HEK293T (cell line): ENCODE measurements at regions of chr15 and their contacts with region 1.

Region 1: DNA sequence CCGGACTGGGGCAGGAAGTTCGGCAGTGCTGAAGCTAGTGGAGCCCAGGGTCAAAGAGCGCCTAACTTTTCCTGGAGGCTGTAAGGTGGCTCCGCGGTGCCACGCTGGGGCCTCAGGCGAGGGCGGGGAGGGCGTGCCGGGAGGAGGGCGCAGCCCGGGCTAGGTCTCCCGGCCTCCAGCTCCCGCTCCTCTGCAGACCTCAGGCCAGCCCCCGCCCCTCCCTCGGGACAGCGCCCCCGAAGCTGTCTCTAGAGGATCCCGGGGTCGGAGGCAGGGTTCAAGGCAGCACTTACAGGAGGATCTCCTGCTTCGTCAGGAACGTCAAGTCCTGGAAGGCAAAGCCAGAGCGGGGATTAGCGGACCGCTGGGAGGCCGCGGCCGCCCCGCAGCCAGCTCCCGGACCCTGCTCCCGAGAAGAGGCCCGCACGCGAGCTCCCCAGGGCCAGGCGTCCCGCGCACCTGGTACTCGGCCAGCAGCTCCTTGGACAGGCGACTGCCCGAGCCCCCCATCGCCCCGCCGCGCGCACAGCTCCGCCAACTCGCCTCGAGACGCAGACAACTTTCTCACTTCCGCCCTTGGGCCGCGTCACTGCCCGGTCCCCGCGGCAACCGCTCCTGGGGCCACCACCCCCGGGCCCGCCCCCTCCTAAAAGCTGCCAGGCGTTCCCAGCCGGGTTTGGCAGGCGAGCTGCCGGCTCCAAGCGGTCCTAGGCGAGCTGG is at the start of gene CIB1:
- DNase-seq: peak; percentile 100

Region 2: GRCh38 chr15:90201130-90201949 is 32.2 kb before region 1 on chr15 and contains the start of gene SEMA4B:
- CTCF ChIA-PET with region 1: interaction called, 3 read pairs
- POLR2A ChIA-PET with region 1: interaction called, 10 read pairs
- DNase-seq: peak; percentile 87

Region 3: GRCh38 chr15:90221246-90221900 is 12.2 kb before region 1 on chr15:
- CTCF ChIA-PET with region 1: interaction called, 37 read pairs
- POLR2A ChIA-PET with region 1: interaction called, 9 read pairs
- DNase-seq: peak; percentile 87

Region 4: GRCh38 chr15:90249203-90249863 is 15.8 kb after region 1 on chr15 and contains the start of gene TTLL13:
- CTCF ChIA-PET with region 1: interaction called, 4 read pairs
- POLR2A ChIA-PET with region 1: interaction called, 37 read pairs
- DNase-seq: peak; percentile 96

Region 5: DNA sequence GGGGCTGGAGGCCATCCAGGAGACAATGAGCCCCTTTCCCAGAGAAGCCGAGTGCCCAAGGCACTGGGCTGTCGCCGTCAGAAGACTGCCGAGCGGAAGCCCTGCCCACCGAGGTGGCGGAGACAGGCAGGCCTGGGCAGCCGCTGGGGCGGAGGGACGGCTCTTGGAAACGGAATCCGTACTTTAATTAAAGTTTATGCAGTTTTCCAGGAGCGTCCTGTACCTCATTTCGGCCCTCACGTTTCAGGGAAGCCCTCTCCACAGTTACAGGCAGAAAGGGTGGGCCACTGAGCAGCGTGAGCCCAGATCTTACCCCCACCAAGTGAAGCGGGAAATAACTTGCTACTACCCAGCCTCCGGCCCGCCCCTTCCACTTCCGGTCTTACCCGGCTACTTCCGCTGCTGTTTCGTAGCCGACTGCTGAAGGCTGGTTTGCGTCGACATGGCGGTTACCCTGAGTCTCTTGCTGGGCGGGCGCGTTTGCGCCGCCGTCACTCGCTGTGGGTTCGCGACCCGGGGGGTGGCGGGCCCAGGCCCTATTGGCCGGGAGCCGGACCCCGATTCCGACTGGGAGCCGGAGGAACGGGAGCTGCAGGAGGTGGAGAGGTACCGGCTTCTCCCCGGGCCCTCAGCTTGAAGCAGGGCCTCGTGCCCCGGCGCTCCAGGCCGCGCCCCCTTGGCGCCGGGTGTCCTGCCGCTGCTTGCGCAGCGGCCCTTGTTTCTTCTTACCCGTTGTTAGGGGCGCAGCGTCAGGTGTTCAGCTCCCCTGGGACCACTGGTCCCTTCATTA is 31.9 kb after region 1 on chr15 and contains the start of gene NGRN:
- CTCF ChIA-PET with region 1: no interaction called
- POLR2A ChIA-PET with region 1: interaction called, 11 read pairs
- DNase-seq: peak; percentile 92